Posterior vena cava (tissue), 2 donors: ENCODE measurements at regions of chr3 and their contacts with region 1.

Region 1: DNA sequence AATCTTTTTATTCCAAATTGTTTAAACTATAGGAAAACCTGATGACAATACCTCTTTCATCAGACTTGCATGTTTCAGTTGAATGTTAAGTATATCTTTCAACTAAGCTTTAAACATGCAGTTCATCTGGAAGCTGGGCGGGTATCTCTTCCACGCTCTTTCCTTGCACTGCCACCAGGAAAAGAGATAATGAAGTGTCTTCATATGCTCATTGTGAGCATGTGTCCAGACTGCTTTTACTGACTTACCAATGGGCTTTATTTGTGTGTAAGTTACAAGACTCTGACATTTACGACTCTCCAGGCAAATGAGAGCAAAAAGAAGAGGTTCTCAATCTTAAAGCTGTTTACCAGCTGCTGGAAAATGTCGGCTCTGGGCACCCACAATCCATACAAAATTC is 52.7 kb downstream of the TMEM212 start:
- DNase-seq: no peak

Region 2: GRCh38 chr3:169945313-169945712 is 1950.6 kb before region 1 on chr3:
- intact Hi-C with region 1: no loop called
- DNase-seq: no peak

Region 3: GRCh38 chr3:171095063-171095462 is 800.8 kb before region 1 on chr3:
- intact Hi-C with region 1: loop called in 1 of 2 experiments (anchors 5 kb)
- DNase-seq: no peak